AG04449 (cell line): ENCODE measurements at regions of chr1 and their contacts with region 1.

Region 1: DNA sequence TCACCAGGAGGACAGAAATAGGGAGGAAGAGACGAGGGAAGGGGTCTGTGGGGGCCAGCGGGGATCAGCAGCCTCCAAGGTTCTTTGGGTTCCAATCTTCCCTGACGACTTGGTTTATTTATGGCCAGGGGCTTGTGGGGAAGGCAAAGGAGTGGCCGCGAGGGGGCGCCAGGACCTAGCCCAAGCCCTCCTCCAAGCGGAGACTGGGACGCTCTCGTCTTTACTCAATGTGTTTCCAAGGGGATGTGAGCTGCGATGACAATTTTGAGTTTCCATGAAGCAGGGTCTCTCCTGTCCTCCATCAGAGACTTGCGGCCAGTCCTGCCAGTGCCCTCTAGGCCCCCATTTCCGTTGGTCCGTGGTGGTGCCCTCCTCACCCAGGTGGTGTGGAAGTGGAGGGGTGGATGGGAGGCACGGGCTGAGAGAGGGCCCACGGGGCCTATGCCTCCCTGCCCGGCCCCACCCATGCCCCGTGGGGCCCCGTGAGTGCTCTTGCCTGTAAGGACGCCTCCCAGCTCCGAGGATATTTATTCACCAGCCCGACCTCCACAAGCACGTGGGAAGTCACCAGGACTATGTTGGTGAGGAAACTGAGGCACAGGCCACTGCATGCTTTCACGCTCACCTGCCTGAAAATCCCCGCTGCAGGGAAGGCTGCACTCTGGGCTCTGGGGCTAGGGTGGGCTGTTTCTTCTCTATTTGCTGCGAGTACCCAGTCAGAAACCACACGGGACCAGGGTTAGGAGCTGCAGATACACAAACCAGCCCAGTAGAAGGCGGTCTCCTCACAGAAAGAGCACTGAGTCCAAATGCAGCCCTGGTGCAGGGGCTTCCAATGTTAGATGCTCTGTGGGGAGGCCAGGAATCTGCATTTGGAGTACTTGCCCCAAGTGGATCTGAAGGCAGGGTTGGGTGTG is 26.5 kb downstream of the DMRTB1 start:
- DNase-seq: no peak
- H3K4me3 ChIP-seq: no peak overlapping the region; the same call in 1 of the 2 replicates
- CTCF ChIP-seq: peak; percentile 93

Region 2: DNA sequence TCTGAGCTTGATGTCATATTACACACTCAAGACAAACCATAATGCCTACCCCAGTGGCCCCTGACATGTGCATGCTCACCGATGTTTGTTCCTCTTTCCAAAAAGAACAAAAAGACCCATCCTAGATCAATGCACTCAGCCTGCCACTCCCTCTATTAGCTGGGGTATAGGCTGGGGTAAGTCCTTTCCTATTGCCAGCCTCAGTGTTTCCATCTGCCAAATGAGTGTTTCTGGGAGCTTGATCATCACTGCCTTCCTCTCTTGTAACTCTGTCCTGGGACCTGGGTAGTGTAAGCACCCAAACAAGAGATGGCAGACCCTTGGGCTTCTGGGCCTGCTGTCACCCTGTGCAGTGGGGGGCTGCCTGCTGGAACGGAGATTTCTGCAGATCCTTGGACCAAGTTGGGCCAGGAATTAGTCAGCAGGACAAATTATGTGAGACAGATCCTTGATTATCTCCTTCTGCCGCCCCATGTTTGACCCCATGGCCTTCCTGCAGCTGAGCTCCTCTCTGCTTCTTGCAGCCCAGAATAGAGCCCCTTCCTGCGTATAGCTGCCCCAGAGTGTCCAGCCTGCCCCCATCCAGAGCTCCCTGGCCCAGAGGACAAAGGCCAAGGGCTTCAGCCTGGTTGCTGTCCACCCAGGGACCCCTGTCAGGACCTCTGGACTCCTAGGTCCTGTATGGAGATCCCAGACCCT is 126.4 kb before region 1 on chr1:
- CTCF ChIA-PET with region 1: no interaction called
- POLR2A ChIA-PET with region 1: no interaction called
- DNase-seq: no peak
- H3K4me3 ChIP-seq: no peak overlapping the region
- CTCF ChIP-seq: no peak

Region 3: DNA sequence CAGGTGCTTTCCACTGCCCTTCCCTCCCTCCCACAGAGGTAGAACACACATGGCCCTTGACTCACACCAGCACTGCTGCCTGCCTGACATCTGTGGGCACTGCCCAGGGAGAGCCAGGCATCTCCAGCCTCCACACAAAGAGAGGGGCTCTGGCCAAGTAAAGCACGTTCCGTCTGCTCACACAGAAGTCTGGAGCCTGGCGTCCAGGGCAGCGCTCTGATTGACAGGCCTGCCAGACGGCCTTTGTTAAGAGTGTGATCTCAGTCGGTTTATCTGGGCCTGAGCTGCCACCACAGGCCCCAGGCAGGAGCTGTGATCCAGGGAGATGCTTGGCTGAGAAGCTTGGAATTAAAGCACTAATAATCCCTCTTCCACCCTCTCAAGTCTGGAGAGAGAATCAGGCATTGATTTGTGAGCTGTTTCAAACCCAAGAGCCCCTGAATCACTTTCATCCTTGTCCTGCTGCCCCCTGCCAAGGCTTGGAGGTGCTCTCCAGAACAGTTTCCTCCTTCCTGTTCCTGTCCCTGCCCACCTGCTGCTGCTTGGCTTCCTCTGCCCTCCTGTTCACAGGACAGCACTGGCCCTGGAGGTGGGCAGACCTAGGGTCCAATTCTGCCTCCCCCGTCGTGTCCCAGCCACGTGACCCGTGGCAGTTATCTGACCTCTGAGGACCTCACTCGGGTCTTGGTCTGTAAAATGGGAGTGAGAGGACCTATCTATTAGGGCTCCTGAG is 22.8 kb before region 1 on chr1:
- CTCF ChIA-PET with region 1: interaction called, 17 read pairs
- POLR2A ChIA-PET with region 1: no interaction called
- DNase-seq: no peak
- H3K4me3 ChIP-seq: no peak overlapping the region
- CTCF ChIP-seq: no peak

Region 4: GRCh38 chr1:53495633-53496345 is 10.1 kb after region 1 on chr1:
- CTCF ChIA-PET with region 1: interaction called, 32 read pairs
- POLR2A ChIA-PET with region 1: no interaction called
- DNase-seq: no peak
- H3K4me3 ChIP-seq: no peak overlapping the region
- CTCF ChIP-seq: no peak

Region 5: GRCh38 chr1:53732912-53733317 is 247.2 kb after region 1 on chr1:
- CTCF ChIA-PET with region 1: interaction called, 15 read pairs
- POLR2A ChIA-PET with region 1: no interaction called
- DNase-seq: peak; percentile 91
- H3K4me3 ChIP-seq: peak overlapping the region; percentile 41
- CTCF ChIP-seq: no peak

Region 6: DNA sequence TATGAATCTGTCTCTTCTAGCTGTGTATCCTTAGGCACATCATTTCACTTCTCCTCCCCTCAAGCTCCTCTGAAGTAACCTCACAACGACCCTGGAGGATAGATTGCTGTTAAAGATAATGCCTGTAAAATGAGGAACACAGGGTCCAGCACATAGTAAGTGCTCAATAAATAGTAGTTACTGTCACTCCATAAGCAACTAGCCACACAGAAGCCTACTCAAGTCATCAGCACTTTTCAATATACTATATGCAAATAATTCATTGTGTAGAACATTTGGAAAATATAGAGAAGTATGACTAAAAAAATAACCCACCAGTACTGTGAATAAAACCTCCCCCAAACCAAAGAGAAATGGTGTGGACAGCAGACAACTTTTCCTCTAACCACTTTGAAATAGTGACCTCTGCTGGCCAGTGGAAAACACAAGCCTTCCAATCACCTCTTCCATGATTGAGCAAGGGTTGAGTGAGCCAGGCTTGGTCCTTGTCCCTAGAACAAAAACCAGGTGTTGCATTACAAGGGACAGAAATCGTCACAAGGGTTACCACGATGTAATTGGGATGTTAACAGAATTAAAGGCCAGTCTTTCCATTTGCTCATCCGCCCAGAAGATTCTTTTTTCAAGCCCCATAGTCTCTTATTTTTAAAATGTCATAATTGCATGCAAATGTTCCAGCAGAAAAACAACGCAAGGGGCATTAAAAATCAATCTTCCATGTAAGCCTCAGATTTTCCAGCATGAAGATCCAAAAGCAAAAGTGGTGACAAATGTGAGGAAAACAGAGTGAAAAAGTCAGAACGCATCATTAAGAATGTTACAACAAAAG is 269.0 kb after region 1 on chr1:
- CTCF ChIA-PET with region 1: interaction called, 191 read pairs
- POLR2A ChIA-PET with region 1: no interaction called
- DNase-seq: no peak
- H3K4me3 ChIP-seq: no peak overlapping the region
- CTCF ChIP-seq: peak; percentile 72

Region 7: DNA sequence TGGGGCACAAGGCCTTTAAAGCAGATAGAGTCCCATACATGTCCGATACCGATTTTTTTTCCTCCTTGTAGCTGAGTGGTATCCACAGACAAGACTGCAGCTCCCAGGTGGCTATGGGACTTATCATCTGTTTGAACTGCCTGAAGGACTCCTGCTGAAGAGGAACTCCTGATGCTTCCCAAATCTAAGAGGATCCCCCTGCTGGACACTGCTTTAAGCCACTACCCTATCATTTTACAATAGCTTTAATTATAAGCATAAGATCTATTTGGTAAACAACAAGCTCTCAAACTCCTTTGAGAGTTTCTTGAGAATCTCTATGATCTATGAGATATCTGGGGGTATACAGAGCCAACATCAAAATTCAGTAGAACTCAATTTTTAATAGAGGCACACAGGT is 340.6 kb after region 1 on chr1:
- CTCF ChIA-PET with region 1: interaction called, 30 read pairs
- POLR2A ChIA-PET with region 1: no interaction called
- DNase-seq: no peak
- H3K4me3 ChIP-seq: no peak overlapping the region
- CTCF ChIP-seq: peak; percentile 24